B cell (primary cell): ENCODE measurements at regions of chr2 and their contacts with region 1.

Region 1: DNA sequence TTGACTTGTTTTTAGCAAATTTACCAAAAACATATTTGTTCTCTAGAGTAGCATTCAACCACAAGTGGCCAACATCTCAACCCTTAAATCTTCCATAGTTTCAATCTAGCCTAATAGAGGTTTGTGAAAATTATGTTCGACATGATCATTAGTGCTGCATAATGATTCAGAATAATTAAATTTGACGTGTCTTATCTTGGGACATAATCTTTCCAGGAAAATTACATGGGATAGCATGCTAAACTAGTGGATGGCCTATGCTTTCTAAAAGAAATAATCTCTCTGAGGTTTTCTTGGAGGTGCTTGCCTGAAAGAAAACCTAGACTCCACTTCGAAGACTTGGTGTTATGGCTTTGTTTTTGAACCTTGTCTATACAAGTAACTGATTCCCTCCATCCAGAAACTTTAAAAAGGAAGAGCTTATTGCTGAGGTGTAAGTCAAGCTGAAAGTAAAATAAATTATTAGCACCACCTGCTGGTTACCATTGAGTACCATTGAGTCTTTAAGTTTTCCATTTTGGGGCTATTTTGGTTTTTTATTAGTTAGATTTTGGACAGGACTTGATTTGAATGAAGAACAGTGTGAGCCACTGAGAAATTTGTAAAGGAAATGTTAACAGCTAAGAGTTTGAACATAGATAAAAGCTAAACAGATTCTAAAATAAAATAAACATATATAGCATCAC is 32.7 kb downstream of the COX7A2L start:
- DNase-seq: peak; percentile 23
- ATAC-seq: no peak
- H3K4me3 ChIP-seq: no peak overlapping the region
- H3K4me3 Mint-ChIP-seq: no peak overlapping the region
- H3K27ac ChIP-seq: no peak overlapping the region
- H3K27ac Mint-ChIP-seq: no peak overlapping the region
- H3K4me1 ChIP-seq: no peaks in the 10 kb centered on the region
- H3K4me1 Mint-ChIP-seq: no peaks in the 10 kb centered on the region
- H3K27me3 ChIP-seq: no peaks in the 10 kb centered on the region
- H3K27me3 Mint-ChIP-seq: no peaks in the 10 kb centered on the region
- CTCF ChIP-seq: peak; percentile 40

Region 2: GRCh38 chr2:42296226-42296625 is 32.1 kb before region 1 on chr2:
- CTCF ChIA-PET with region 1: no interaction called
- POLR2A ChIA-PET with region 1: no interaction called
- intact Hi-C with region 1: loop called (anchors 5 kb)
- DNase-seq: peak; percentile 68
- ATAC-seq: peak; percentile 47
- H3K4me3 ChIP-seq: no peak overlapping the region
- H3K4me3 Mint-ChIP-seq: peak overlapping the region; percentile 5
- H3K27ac ChIP-seq: peak overlapping the region; percentile 14 to 60
- H3K27ac Mint-ChIP-seq: peak overlapping the region; percentile 46
- H3K4me1 ChIP-seq: peaks cover 19 to 24% of the 10 kb centered on the region in 2 donors
- H3K4me1 Mint-ChIP-seq: peaks cover 26% of the 10 kb centered on the region
- H3K27me3 ChIP-seq: no peaks in the 10 kb centered on the region
- H3K27me3 Mint-ChIP-seq: no peaks in the 10 kb centered on the region
- CTCF ChIP-seq: no peak